ENCODE measurements at regions of chr12 and their contacts with region 1.

Region 1: DNA sequence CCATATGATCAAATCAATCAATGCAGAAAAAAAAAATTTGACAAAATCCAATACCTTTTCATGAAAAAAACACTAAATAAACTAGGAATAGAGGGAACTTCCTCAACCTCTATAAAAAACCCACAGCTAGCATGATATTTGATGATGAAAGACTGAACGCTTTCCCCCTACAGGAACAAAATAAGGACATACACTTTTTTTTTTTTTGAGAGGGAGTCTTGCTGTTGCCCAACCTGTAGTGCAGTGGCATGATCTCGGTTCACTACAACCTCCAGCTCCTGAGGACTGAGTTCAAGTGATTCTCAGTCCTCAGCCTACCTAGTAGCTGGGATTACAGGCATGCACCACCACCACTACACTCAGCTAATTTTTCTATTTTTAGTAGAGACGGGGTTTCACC is 17.9 kb upstream of the CAMKK2 start:
- DNase-seq: no peak
- ATAC-seq: no peak
- H3K4me3 ChIP-seq: no peak overlapping the region
- H3K27ac ChIP-seq: no peak overlapping the region
- H3K4me1 ChIP-seq: peaks cover 0 to 17% (median 0%) of the 10 kb centered on the region in 9 donors
- H3K27me3 ChIP-seq: no peaks in the 10 kb centered on the region
- CTCF ChIP-seq: no peak

Region 2: GRCh38 chr12:121110211-121110940 is 204.1 kb before region 1 on chr12:
- intact Hi-C with region 1: no loop called
- DNase-seq: peak; percentile 39 to 65
- ATAC-seq: peak; percentile 68 to 86 (median 79)
- H3K4me3 ChIP-seq: no peak overlapping the region
- H3K27ac ChIP-seq: no peak overlapping the region
- H3K4me1 ChIP-seq: peaks cover 0 to 7% (median 0%) of the 10 kb centered on the region in 9 donors
- H3K27me3 ChIP-seq: no peaks in the 10 kb centered on the region
- CTCF ChIP-seq: peak; percentile 86 to 98 (median 94)

Region 3: DNA sequence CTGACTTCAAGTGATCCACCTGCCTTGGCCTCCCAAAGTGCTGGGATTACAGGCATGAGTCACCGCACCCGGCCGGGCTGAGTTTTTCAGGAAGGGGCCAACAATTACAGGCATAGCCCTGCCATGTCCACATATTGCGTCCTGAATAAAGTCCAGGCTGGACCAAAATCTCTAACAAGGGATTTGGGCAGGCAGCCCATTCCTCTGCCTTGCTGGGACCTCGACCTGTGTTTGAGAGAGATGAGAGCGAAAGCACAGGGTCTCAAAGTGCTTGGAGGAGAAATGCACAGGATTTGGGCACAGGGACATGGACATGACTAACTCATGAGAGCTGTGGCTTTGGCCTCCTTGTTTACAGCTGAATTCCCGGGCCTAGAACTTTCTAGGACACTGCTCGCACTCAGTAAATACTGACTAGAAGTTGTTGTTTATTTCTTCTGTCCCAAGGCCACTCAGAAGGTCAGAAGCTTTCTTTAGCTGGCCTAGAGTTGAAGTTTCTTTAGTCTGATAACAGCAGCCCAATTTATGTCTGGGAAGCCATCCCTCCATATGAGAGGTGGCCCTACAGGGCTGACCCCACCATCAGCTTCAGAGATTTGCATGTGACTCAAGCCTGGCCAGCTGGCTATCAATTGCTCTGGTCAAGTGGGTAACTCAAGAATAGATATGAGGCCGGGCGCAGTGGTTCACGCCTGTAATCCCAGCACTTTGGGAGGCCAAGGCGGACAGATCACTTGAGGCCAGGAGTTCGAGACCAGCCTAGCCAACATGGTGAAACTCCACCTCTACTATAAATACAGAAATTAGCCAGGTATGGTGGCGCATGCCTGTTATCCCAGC is 29.7 kb before region 1 on chr12:
- intact Hi-C with region 1: loop called in 1 of 10 experiments (anchors 1 kb)
- DNase-seq: no peak
- ATAC-seq: peak in 1 of 8 donors; percentile 30
- H3K4me3 ChIP-seq: no peak overlapping the region
- H3K27ac ChIP-seq: peak overlapping the region in 5 of 10 donors; percentile 12 to 53 (median 39)
- H3K4me1 ChIP-seq: peaks cover 3 to 70% (median 38%) of the 10 kb centered on the region in 9 donors
- H3K27me3 ChIP-seq: no peaks in the 10 kb centered on the region
- CTCF ChIP-seq: no peak